Dendritic cell treated with granulocyte-macrophage colony-stimulating factor and Interleukin-4, amounts not matched to agents 40 ng/mL and 50 ng/mL, for 4 days (primary cell): ENCODE measurements at regions of chr1 and their contacts with region 1.

Region 1: DNA sequence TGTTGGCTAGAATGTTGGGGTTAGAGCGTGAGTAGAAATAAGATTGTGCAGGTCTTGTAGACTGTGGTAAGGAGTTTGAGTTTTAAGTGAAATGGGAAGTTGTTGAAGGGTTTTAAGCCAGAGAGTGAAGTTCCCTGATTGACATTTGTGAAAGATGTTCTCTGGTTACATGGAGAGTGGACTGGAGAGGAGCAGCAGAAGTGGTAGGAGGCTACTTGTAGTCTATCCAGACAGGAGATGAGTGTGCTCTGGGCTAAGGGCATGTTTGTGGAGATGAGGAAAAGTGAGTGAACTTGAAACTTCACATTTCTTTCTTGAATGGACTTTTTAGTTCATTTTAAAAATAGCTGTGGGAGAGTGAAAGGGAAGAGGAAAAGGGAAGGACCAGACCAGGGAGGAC is 37.0 kb downstream of the F3 start:
- H3K4me3 Mint-ChIP-seq: no peak overlapping the region
- H3K27ac Mint-ChIP-seq: peak overlapping the region; percentile 14
- H3K4me1 Mint-ChIP-seq: peaks cover 22% of the 10 kb centered on the region
- H3K27me3 Mint-ChIP-seq: no peaks in the 10 kb centered on the region

Region 2: GRCh38 chr1:94438692-94439276 is 65.8 kb before region 1 on chr1:
- intact Hi-C with region 1: loop called (anchors 2 kb)
- H3K4me3 Mint-ChIP-seq: no peak overlapping the region
- H3K27ac Mint-ChIP-seq: no peak overlapping the region
- H3K4me1 Mint-ChIP-seq: no peaks in the 10 kb centered on the region
- H3K27me3 Mint-ChIP-seq: no peaks in the 10 kb centered on the region